B cell (primary cell): ENCODE measurements at regions of chr15 and their contacts with region 1.

Region 1: DNA sequence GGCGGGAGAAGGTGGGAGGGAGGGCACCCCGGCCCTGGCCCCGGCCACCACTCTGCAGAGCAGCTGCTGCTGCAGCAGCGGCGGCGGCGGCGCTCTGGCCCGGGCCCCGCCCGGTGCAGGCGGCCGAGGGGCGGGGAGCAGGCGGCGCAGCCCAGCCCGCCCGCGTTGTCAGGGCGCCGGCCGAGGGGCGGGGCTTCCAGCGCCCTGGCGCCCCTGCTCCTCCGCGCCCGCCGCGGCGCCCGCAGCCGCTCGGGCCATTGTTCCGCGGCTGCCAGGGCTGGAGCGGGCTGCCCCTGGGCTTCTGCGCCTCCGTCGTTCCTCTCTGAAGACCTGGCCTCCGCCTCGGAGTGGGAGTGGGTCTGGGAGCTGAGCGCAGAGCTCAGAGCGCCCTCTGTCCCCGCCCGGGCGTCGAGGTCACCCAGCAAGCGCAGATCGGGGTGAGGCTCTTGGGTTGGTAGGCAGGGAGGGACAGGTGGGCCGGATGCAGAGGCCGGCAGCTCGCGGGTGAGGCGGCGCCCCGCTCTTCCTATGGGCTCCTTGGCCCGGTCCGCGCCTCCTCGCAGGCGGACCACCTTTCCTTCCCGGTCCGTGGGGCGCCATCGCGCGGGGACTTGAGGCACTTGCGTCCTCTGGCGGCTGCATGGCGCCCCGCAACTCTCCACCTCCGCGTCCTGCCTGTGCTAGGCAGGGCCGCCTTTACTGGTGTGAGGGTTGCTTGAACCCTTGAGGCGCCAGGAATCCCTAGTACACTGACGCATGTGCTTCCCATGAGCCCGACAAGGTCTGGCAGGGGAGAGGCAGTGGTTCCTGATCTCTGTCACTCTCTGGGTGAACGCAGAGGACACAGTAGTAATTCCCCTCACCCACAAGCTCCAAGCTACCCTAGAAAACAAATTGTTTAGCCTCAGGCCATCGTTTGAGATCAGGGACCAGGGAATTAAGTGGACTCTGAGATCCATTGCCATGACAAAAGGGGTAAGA is at the start of gene LPCAT4:
- DNase-seq: peak; percentile 94
- ATAC-seq: peak; percentile 84
- H3K4me3 ChIP-seq: peak within 1 kb of the TSS; percentile 38 to 90 (median 66)
- H3K4me3 Mint-ChIP-seq: peak within 1 kb of the TSS; percentile 96
- H3K27ac ChIP-seq: peak within 1 kb of the TSS; percentile 70 to 88
- H3K27ac Mint-ChIP-seq: peak within 1 kb of the TSS; percentile 97
- H3K4me1 ChIP-seq: peaks cover 18 to 28% of the 10 kb centered on the region in 2 donors
- H3K4me1 Mint-ChIP-seq: peaks cover 40% of the 10 kb centered on the region
- H3K27me3 ChIP-seq: no peaks in the 10 kb centered on the region
- H3K27me3 Mint-ChIP-seq: no peaks in the 10 kb centered on the region
- CTCF ChIP-seq: peak; percentile 94
- total RNA-seq, gene LPCAT4: 64.2 and 68.1 TPM in 2 replicates

Region 2: DNA sequence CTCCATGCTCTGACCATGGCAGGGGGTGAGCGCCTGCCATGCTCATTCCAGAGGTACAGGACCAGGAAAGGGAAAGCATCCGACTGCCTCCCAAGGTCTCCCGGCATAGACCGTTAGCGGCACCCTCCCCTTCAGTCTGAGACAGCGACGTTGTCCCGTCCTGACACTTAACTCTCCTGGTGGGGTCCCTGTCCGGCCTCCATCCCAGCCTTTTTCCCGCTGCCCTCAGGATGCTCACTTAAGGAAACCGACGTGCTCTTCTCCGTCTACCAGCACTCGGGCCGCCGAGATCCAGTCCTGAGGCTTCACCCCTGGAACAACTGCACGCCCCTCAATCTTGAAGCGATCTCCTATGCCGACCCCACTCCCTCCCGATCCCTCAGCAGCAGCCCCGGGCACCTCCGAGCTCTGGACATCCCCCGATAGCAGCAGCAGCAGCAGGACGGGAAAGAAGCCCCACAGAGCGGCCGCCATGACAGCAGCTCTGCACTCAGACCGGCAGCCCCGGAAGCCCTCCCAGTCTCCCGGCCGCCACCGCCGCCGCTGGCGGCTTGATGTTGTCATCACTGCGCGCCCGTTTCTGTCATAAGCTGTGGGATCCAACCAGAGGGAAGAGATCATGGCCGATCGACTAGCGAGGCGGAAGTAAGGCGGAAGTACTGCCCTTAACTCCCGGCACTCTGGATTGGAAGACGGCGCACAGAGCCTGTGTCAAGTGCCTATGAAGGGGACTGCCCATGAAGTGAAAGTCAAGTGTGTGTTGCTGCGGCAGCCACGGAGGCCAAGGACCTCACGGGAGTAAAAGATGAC is 265.8 kb before region 1 on chr15 and contains the starts of genes EMC7 and PGBD4:
- CTCF ChIA-PET with region 1: no interaction called
- POLR2A ChIA-PET with region 1: interaction called, 4 read pairs
- intact Hi-C with region 1: loop called (anchors 1 kb)
- DNase-seq: peak; percentile 99
- ATAC-seq: peak; percentile 99
- H3K4me3 ChIP-seq: peak within 1 kb of the TSS; percentile 80 to 99 (median 82)
- H3K4me3 Mint-ChIP-seq: peak within 1 kb of the TSS; percentile 98
- H3K27ac ChIP-seq: peak within 1 kb of the TSS; percentile 92 to 98
- H3K27ac Mint-ChIP-seq: peak within 1 kb of the TSS; percentile 99
- H3K4me1 ChIP-seq: peaks cover 18 to 19% of the 10 kb centered on the region in 2 donors
- H3K4me1 Mint-ChIP-seq: peaks cover 41% of the 10 kb centered on the region
- H3K27me3 ChIP-seq: no peaks in the 10 kb centered on the region
- H3K27me3 Mint-ChIP-seq: no peaks in the 10 kb centered on the region
- CTCF ChIP-seq: no peak
- total RNA-seq, gene EMC7: 28.8 and 29.9 TPM in 2 replicates
- total RNA-seq, gene PGBD4: 5.2 and 5.6 TPM in 2 replicates

Region 3: DNA sequence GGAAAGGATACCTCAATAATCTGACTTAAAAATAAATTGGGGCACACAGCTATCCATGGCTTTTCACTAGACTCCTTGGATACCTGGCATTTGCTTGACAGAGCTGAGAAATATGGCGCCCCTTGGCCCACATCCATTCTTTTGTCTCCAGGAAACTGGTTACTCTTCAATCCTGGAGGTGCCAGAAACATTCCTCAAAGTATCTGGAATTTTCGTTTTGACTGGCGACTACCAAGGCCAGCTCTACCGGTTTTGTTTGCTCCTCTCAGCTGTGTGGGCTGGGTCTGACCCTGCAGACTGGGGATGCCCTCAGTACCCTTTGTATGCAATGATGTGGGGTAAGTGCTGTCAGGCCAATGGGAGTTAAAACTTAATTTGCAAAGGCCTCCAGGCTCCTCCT is 184.4 kb before region 1 on chr15:
- CTCF ChIA-PET with region 1: no interaction called
- POLR2A ChIA-PET with region 1: no interaction called
- intact Hi-C with region 1: no loop called
- DNase-seq: no peak
- ATAC-seq: no peak
- H3K4me3 ChIP-seq: no peak overlapping the region
- H3K4me3 Mint-ChIP-seq: no peak overlapping the region
- H3K27ac ChIP-seq: no peak overlapping the region
- H3K27ac Mint-ChIP-seq: no peak overlapping the region
- H3K4me1 ChIP-seq: no peaks in the 10 kb centered on the region
- H3K4me1 Mint-ChIP-seq: peaks cover 6% of the 10 kb centered on the region
- H3K27me3 ChIP-seq: no peaks in the 10 kb centered on the region
- H3K27me3 Mint-ChIP-seq: no peaks in the 10 kb centered on the region
- CTCF ChIP-seq: no peak

Region 4: GRCh38 chr15:34223904-34224596 is 143.3 kb before region 1 on chr15:
- CTCF ChIA-PET with region 1: interaction called, 13 read pairs
- POLR2A ChIA-PET with region 1: no interaction called
- intact Hi-C with region 1: loop called (anchors 1 kb)
- DNase-seq: no peak
- ATAC-seq: no peak
- H3K4me3 ChIP-seq: peak overlapping the region; percentile 77 to 98 (median 82)
- H3K4me3 Mint-ChIP-seq: peak overlapping the region; percentile 94
- H3K27ac ChIP-seq: peak overlapping the region; percentile 77 to 90
- H3K27ac Mint-ChIP-seq: peak overlapping the region; percentile 98
- H3K4me1 ChIP-seq: peaks cover 8 to 16% of the 10 kb centered on the region in 2 donors
- H3K4me1 Mint-ChIP-seq: peaks cover 26% of the 10 kb centered on the region
- H3K27me3 ChIP-seq: no peaks in the 10 kb centered on the region
- H3K27me3 Mint-ChIP-seq: no peaks in the 10 kb centered on the region
- CTCF ChIP-seq: no peak

Region 5: GRCh38 chr15:34259566-34259965 is 107.8 kb before region 1 on chr15:
- CTCF ChIA-PET with region 1: interaction called, 12 read pairs
- POLR2A ChIA-PET with region 1: interaction called, 3 read pairs
- intact Hi-C with region 1: no loop called
- DNase-seq: no peak
- ATAC-seq: no peak
- H3K4me3 ChIP-seq: no peak overlapping the region
- H3K4me3 Mint-ChIP-seq: no peak overlapping the region
- H3K27ac ChIP-seq: no peak overlapping the region
- H3K27ac Mint-ChIP-seq: peak overlapping the region; percentile 28
- H3K4me1 ChIP-seq: no peaks in the 10 kb centered on the region
- H3K4me1 Mint-ChIP-seq: no peaks in the 10 kb centered on the region
- H3K27me3 ChIP-seq: no peaks in the 10 kb centered on the region
- H3K27me3 Mint-ChIP-seq: no peaks in the 10 kb centered on the region
- CTCF ChIP-seq: no peak

Region 6: GRCh38 chr15:34587717-34588674 is 220.6 kb after region 1 on chr15:
- CTCF ChIA-PET with region 1: interaction called, 13 read pairs
- POLR2A ChIA-PET with region 1: interaction called, 6 read pairs
- intact Hi-C with region 1: no loop called
- DNase-seq: peak; percentile 69
- ATAC-seq: peak; percentile 61
- H3K4me3 ChIP-seq: peak overlapping the region in 1 of 5 experiments; percentile 15
- H3K4me3 Mint-ChIP-seq: peak overlapping the region; percentile 69
- H3K27ac ChIP-seq: no peak overlapping the region
- H3K27ac Mint-ChIP-seq: peak overlapping the region; percentile 4
- H3K4me1 ChIP-seq: peaks cover 5 to 11% of the 10 kb centered on the region in 2 donors
- H3K4me1 Mint-ChIP-seq: peaks cover 9% of the 10 kb centered on the region
- H3K27me3 ChIP-seq: peaks cover 0 to 7% (median 2%) of the 10 kb centered on the region in 4 experiments
- H3K27me3 Mint-ChIP-seq: peaks cover 4% of the 10 kb centered on the region
- CTCF ChIP-seq: peak; percentile 87

Region 7: DNA sequence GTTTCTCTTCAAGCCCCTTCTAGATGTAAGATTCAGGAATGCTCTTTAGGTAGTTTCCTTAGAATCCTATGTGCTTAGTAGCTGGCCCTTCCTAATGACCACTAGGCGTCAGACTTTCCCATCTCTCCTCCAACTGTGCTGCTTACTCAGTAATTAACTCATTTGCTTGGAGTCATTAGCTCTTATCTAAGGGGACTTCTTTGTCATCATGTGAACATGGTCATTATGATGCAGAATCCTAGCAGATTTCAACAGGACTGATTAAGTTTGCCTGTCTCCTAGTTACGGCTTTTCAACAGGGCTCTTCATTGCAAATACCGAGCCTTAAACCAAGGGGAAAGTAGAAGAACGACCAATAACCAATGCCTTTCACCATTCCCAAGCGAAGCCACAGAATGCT is 341.0 kb after region 1 on chr15:
- CTCF ChIA-PET with region 1: no interaction called
- POLR2A ChIA-PET with region 1: no interaction called
- intact Hi-C with region 1: no loop called
- DNase-seq: no peak
- ATAC-seq: no peak
- H3K4me3 ChIP-seq: no peak overlapping the region
- H3K4me3 Mint-ChIP-seq: no peak overlapping the region
- H3K27ac ChIP-seq: no peak overlapping the region
- H3K27ac Mint-ChIP-seq: no peak overlapping the region
- H3K4me1 ChIP-seq: no peaks in the 10 kb centered on the region
- H3K4me1 Mint-ChIP-seq: no peaks in the 10 kb centered on the region
- H3K27me3 ChIP-seq: peaks cover 0 to 8% (median 2%) of the 10 kb centered on the region in 4 experiments
- H3K27me3 Mint-ChIP-seq: peaks cover 35% of the 10 kb centered on the region
- CTCF ChIP-seq: no peak